Left colon (tissue), 2 donors: ENCODE measurements at regions of chr14 and their contacts with region 1.

Region 1: DNA sequence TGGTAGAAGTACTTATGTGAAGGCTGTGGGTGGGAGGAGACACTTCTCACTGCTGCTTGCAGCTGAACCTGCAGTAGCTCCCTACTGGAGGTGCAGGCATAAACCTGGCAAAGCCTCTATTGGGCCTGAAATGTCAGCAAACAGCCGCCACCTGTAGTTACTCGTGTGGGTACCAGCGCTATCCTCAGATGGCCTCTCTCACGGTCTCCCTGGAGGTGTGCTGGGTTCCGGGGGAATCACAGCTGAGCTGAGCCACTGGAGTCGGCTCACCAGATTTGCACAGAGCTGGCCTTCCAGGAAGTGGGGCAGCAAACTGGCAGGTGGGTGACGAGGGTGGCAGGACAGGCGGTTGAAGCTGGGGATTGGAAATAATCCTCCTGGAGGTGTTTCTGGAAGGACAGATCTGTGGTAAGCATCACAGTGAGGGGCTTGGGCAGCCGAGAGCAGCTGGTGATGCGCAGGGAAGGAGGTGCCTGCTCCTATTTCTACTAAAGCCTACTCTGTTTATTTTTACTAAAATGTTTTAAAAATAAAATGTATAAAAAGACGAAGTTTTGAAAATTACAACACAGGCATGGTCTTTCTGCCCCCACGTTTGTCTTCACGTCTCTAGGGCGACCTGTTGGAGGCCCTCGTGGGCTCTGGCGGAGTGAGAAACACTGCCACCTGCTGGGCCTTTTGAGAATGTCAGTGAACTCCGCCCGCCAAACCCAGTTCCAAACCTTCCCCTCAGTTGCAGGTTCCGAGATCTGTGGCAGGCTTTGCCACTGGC is 67.8 kb upstream of the PLEKHG3 start:
- DNase-seq: peak; percentile 59 to 75
- ATAC-seq: peak; percentile 65

Region 2: GRCh38 chr14:64329149-64329548 is 307.2 kb before region 1 on chr14:
- intact Hi-C with region 1: no loop called
- DNase-seq: no peak
- ATAC-seq: no peak

Region 3: DNA sequence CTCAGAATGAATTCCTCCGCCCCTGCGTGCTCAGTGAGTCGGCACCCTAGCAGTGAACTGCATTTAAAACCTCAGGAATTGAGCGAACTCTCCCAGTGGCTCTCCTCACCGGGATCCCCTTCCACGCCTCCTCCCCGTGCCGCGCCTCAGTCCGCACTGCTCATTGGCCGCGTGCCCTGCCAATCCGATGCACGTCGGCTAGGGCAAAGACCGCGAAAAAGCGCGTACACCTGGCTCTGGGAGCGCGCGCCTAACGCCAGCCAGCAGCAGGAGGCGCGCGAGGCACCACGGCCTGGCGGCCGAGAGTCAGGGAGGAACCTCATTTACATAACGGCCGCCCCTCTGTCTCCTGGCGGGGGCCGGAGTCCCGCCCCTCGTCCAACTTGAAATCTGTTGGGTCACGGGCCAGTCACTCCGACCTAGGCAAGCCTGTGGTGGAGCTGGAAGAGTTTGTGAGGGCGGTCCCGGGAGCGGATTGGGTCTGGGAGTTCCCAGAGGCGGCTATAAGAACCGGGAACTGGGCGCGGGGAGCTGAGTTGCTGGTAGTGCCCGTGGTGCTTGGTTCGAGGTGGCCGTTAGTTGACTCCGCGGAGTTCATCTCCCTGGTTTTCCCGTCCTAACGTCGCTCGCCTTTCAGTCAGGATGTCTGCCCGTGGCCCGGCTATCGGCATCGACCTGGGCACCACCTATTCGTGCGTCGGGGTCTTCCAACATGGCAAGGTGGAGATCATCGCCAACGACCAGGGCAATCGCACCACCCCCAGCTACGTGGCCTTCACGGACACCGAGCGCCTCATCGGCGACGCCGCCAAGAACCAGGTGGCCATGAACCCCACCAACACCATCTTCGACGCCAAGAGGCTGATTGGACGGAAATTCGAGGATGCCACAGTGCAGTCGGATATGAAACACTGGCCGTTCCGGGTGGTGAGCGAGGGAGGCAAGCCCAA is 95.9 kb before region 1 on chr14 and contains the start of gene HSPA2:
- intact Hi-C with region 1: loop called in 1 of 2 experiments (anchors 5 kb)
- DNase-seq: peak; percentile 98 to 99
- ATAC-seq: peak; percentile 91
- total RNA-seq, gene HSPA2: 52.7 to 61.7 TPM

Region 4: GRCh38 chr14:64681796-64682710 is 45.7 kb after region 1 on chr14:
- intact Hi-C with region 1: no loop called
- DNase-seq: peak; percentile 57 to 70
- ATAC-seq: peak; percentile 76